Heart left ventricle (tissue), 16 donors: ENCODE measurements at regions of chr12 and their contacts with region 1.

Region 1: GRCh38 chr12:4401108-4401507 is 21.6 kb upstream of the FGF23 start:
- DNase-seq: no peak
- ATAC-seq: no peak
- H3K4me3 ChIP-seq: no peak overlapping the region
- H3K27ac ChIP-seq: no peak overlapping the region
- H3K4me1 ChIP-seq: no peaks in the 10 kb centered on the region
- H3K27me3 ChIP-seq: peaks cover 0 to 4% (median 0%) of the 10 kb centered on the region in 9 donors
- CTCF ChIP-seq: no peak
- POLR2A ChIP-seq: no peak

Region 2: DNA sequence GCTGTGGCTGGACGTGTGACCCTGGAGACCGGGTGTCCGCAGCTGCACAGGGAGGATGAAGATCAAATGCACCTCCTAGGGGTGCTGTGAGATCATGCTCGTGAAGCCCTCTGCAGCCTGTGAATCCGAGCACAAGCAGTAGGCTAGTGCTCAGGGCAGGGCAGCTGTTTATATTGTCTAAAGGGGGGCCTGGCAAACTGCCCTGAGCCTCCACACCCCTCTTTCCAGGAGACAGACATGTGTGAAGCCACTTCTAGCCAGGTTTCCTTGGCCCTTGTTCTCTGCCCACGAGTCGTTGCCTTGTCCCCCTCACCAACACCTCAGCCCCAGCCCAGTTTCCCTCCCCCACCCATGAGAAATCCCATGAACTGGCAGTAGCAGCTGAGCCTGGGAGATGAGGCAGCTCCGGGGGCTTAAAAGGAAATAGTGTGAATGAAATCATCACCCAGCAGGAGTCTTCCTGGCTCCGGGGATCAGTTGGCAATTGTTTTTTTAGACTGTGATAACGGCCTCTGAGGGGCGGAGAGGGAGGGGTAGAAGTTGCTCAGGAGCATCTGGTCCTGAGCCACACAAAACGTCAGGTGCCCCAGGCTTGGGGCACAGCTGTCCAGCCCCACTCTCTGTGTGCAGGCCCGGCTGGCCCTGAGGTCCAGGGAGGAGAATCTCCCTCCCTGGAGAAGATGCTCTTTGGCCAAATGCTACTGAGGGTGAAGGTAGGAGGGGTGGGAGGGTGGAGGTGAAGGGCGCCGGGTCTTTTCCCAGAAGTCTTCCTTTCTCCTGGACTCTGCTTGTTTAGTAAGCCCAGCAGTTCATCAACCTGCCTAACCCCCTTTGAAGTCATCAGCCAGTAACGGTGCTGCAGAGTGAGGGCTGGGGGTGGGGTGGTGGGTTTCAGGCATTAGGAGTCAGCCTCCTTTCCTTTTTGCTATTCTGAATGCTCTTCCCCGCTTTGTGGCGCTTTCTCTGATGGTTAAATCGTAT is 40.5 kb after region 1 on chr12:
- intact Hi-C with region 1: loop called in 1 of 10 experiments (anchors 1 kb)
- DNase-seq: no peak
- ATAC-seq: no peak
- H3K4me3 ChIP-seq: no peak overlapping the region
- H3K27ac ChIP-seq: no peak overlapping the region
- H3K4me1 ChIP-seq: peaks cover 0 to 25% (median 9%) of the 10 kb centered on the region in 12 donors
- H3K27me3 ChIP-seq: peaks cover 0 to 4% (median 0%) of the 10 kb centered on the region in 9 donors
- CTCF ChIP-seq: peak in 1 of 12 donors; percentile 7
- POLR2A ChIP-seq: no peak